Activated T-helper 1 cell treated with anti-CD3 and anti-CD28 coated beads, Interleukin-12 subunit alpha, Interleukin-12 subunit beta, Interleukin-2, Interleukin-4 antibody, amounts not matched to agents 30 ng/mL and 10 ng/mL and 1 ng/mL, durations not matched to agents 14 hours and 24 hours and 36 hours (primary cell): ENCODE measurements at regions of chr3 and their contacts with region 1.

Region 1: DNA sequence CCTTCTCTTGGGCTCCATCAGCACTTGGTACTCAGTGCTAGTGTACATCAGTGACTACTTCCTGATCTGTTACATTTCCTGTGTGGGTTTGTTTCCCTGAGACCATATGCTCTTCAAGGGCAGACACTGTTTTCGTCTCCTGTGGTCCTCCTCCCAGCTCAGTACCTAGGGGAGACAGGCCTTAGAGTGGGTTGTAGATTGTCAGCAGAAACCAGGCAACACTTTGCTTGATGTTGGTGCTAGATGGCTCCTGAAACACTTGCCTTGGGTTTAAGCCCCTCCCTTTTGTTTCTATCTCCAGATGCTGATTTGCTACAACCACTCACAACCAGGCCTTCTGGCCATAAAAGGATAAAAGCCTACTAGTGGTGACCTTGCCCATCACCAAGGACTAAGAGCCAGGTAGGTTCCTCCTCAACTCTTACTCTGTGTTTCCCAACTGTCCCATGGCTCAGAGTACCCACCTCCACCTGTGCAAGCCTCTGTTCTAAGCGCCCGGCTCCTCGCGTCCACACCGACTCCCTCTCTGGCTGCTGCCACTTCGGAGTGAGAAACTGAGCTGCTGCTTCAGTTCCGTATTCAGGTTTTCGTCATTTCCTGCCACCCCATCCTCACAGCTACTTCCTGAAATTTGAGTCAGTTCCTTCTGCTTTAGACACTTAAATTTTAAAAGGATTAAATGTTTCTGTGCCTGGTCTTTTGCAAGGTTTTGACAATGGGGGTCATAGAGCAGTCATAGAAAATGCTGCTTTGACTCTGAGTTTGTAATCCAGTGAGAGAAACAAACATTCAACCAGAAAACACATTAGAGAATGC is at the start of gene HCLS1:
- DNase-seq: peak; percentile 73
- H3K4me3 Mint-ChIP-seq: peak within 1 kb of the TSS; percentile 95
- H3K27ac Mint-ChIP-seq: peak within 1 kb of the TSS; percentile 99
- H3K4me1 Mint-ChIP-seq: peaks cover 57% of the 10 kb centered on the region
- H3K27me3 Mint-ChIP-seq: no peaks in the 10 kb centered on the region
- total RNA-seq, gene HCLS1: 234 and 235 TPM in 2 replicates

Region 2: GRCh38 chr3:121018917-121019321 is 641.6 kb before region 1 on chr3:
- intact Hi-C with region 1: no loop called
- DNase-seq: no peak
- H3K4me3 Mint-ChIP-seq: no peak overlapping the region
- H3K27ac Mint-ChIP-seq: no peak overlapping the region
- H3K4me1 Mint-ChIP-seq: no peaks in the 10 kb centered on the region
- H3K27me3 Mint-ChIP-seq: no peaks in the 10 kb centered on the region

Region 3: GRCh38 chr3:121690777-121691405 is 30.3 kb after region 1 on chr3:
- intact Hi-C with region 1: loop called (anchors 2 kb)
- DNase-seq: peak; percentile 1
- H3K4me3 Mint-ChIP-seq: peak overlapping the region; percentile 61
- H3K27ac Mint-ChIP-seq: peak overlapping the region; percentile 73
- H3K4me1 Mint-ChIP-seq: peaks cover 20% of the 10 kb centered on the region
- H3K27me3 Mint-ChIP-seq: no peaks in the 10 kb centered on the region

Region 4: GRCh38 chr3:121735047-121735696 is 74.6 kb after region 1 on chr3:
- intact Hi-C with region 1: loop called (anchors 1 kb)
- DNase-seq: no peak
- H3K4me3 Mint-ChIP-seq: no peak overlapping the region
- H3K27ac Mint-ChIP-seq: peak overlapping the region; percentile 36
- H3K4me1 Mint-ChIP-seq: peaks cover 41% of the 10 kb centered on the region
- H3K27me3 Mint-ChIP-seq: no peaks in the 10 kb centered on the region